ENCODE measurements at regions of chr20 and their contacts with region 1.

Region 1: DNA sequence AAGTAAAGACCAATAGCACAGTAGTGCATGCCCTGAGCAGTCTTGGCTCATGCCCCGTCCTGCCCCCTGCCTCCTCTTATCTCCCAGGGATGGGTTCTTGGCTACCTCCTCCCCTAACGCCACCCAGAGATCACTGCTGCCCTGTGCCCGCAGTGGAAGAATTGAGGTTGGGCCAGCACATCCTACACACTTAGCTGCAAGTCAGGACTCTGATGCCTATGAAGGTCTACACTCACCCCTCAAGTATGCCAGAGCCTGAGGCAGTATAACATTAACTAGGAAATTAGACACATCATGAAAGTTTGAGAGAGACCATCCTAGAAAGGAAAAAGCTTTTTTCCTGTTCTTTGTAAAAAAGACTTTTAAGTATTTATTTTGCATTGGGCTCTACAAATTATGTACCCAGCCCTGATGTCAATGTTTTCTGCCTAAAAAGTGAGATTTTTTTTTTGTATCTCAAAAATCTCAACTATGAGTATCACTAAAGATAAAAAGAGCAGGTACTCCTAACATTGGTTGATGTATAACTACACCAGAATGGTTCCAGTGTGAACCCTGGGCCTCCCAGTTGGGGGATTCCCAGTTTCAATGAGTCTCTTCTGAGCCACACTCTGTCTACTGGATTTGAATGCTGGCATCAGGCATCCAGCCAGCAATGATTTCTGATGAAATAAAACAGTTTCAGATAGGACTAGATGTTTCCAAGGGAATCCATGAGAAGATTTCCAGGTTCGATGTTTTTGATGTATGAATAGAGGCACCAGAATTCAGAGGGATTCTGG is 115.4 kb downstream of the ISM1 start:
- DNase-seq: peak; percentile 48
- ATAC-seq: peak; percentile 85
- H3K4me3 Mint-ChIP-seq: no peak overlapping the region
- H3K27ac Mint-ChIP-seq: no peak overlapping the region
- H3K4me1 Mint-ChIP-seq: peaks cover 20% of the 10 kb centered on the region
- H3K27me3 Mint-ChIP-seq: peaks cover 2% of the 10 kb centered on the region

Region 2: GRCh38 chr20:13274275-13274861 is 62.1 kb before region 1 on chr20:
- CTCF ChIA-PET with region 1: no interaction called
- POLR2A ChIA-PET with region 1: no interaction called
- intact Hi-C with region 1: loop called in 1 of 2 experiments (anchors 10 kb)
- DNase-seq: no peak
- ATAC-seq: no peak
- H3K4me3 Mint-ChIP-seq: no peak overlapping the region
- H3K27ac Mint-ChIP-seq: no peak overlapping the region
- H3K4me1 Mint-ChIP-seq: no peaks in the 10 kb centered on the region
- H3K27me3 Mint-ChIP-seq: no peaks in the 10 kb centered on the region

Region 3: DNA sequence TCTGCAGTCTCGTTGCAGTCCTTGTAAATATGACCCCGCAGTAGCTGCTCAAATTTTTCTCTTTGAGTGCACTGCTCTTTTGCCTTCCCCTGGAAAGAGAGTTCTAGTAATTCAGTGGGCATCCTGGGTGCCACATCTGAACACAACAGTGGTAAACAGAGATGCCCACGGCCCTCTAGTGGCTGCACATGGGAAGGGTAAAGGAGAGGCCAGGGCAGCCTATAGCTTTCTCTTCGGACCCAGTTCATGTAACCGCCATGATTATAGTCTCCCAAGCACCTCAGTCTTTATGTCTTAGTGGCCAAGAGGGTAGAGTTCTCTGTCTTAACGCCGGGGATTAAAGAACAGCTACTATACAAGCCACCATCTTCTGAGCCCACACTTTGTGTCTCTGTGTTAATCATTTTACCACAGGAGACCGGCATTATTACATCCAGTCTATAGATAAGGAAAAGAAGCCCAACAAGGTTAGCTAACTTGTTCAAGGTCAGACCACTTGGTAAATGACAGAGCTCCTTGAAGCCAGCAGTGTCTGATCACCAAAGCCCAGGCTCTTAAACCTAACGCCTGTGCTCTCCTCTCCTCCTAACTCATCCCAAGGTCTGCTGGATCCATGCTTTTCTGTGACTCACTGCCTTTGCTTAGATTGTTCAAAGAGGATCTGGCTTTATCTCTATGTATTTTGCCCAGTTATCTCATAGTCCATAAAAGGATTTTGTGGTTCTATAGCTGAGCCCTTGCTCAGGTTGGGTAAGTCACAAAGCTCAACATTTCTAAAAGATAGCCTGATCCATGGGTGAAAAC is 33.6 kb before region 1 on chr20:
- CTCF ChIA-PET with region 1: no interaction called
- POLR2A ChIA-PET with region 1: no interaction called
- intact Hi-C with region 1: no loop called
- DNase-seq: peak; percentile 73
- ATAC-seq: peak; percentile 93
- H3K4me3 Mint-ChIP-seq: no peak overlapping the region
- H3K27ac Mint-ChIP-seq: no peak overlapping the region
- H3K4me1 Mint-ChIP-seq: no peaks in the 10 kb centered on the region
- H3K27me3 Mint-ChIP-seq: no peaks in the 10 kb centered on the region

Region 4: GRCh38 chr20:13546497-13547131 is 210.1 kb after region 1 on chr20:
- CTCF ChIA-PET with region 1: no interaction called
- POLR2A ChIA-PET with region 1: no interaction called
- intact Hi-C with region 1: no loop called
- DNase-seq: peak; percentile 85
- ATAC-seq: no peak
- H3K4me3 Mint-ChIP-seq: no peak overlapping the region
- H3K27ac Mint-ChIP-seq: no peak overlapping the region
- H3K4me1 Mint-ChIP-seq: no peaks in the 10 kb centered on the region
- H3K27me3 Mint-ChIP-seq: no peaks in the 10 kb centered on the region

Measured in activated CD4-positive, alpha-beta T cell treated with anti-CD3 and anti-CD28 coated beads for 36 hours (primary cell).